WTC11 (cell line): ENCODE measurements at regions of chr5 and their contacts with region 1.

Region 1: GRCh38 chr5:40904205-40904993 is 4.9 kb upstream of the C7 start:
- DNase-seq: peak; percentile 68
- ATAC-seq: peak; percentile 99
- H3K4me3 Mint-ChIP-seq: no peak overlapping the region
- H3K27ac Mint-ChIP-seq: no peak overlapping the region
- H3K4me1 Mint-ChIP-seq: peaks cover 14% of the 10 kb centered on the region
- H3K27me3 Mint-ChIP-seq: no peaks in the 10 kb centered on the region
- CTCF ChIP-seq: peak; percentile 87

Region 2: GRCh38 chr5:40914835-40915234 is 10.4 kb after region 1 on chr5:
- CTCF ChIA-PET with region 1: interaction called, 24 read pairs
- POLR2A ChIA-PET with region 1: no interaction called
- DNase-seq: no peak
- ATAC-seq: peak; percentile 16; the same call in 1 of the 2 replicates
- H3K4me3 Mint-ChIP-seq: no peak overlapping the region
- H3K27ac Mint-ChIP-seq: no peak overlapping the region
- H3K4me1 Mint-ChIP-seq: peaks cover 20% of the 10 kb centered on the region
- H3K27me3 Mint-ChIP-seq: peaks cover 28% of the 10 kb centered on the region
- CTCF ChIP-seq: no peak

Region 3: GRCh38 chr5:41270423-41271251 is 366.2 kb after region 1 on chr5:
- CTCF ChIA-PET with region 1: interaction called, 16 read pairs
- POLR2A ChIA-PET with region 1: no interaction called
- DNase-seq: peak; percentile 25
- ATAC-seq: peak; percentile 90
- H3K4me3 Mint-ChIP-seq: no peak overlapping the region
- H3K27ac Mint-ChIP-seq: no peak overlapping the region
- H3K4me1 Mint-ChIP-seq: no peaks in the 10 kb centered on the region
- H3K27me3 Mint-ChIP-seq: no peaks in the 10 kb centered on the region
- CTCF ChIP-seq: peak; percentile 52

Region 4: GRCh38 chr5:41410737-41411136 is 506.3 kb after region 1 on chr5:
- CTCF ChIA-PET with region 1: interaction called, 15 read pairs
- POLR2A ChIA-PET with region 1: no interaction called
- DNase-seq: peak; percentile 33
- ATAC-seq: peak; percentile 82
- H3K4me3 Mint-ChIP-seq: no peak overlapping the region
- H3K27ac Mint-ChIP-seq: no peak overlapping the region
- H3K4me1 Mint-ChIP-seq: no peaks in the 10 kb centered on the region
- H3K27me3 Mint-ChIP-seq: no peaks in the 10 kb centered on the region
- CTCF ChIP-seq: no peak

Region 5: DNA sequence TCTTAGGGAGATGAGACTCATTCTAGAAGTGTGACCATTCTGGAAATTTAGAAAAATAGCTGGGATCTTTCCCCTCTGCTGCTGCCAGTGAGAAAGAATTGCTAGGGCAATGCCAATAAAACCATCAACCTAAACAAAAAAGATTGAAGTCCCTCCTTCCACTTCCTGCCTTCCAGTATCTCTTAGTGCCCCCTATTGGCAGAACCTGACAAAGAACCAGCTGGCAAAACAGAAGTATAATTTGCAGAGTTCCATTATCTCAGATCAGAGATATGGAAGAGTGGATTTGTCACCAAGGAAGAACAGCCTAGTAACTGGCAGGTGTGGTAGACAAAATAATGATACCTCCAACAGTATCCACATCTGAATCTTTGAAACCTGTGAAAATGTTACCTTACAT is 619.8 kb after region 1 on chr5:
- CTCF ChIA-PET with region 1: interaction called, 14 read pairs
- POLR2A ChIA-PET with region 1: no interaction called
- DNase-seq: peak; percentile 19
- ATAC-seq: peak; percentile 65
- H3K4me3 Mint-ChIP-seq: no peak overlapping the region
- H3K27ac Mint-ChIP-seq: no peak overlapping the region
- H3K4me1 Mint-ChIP-seq: peaks cover 10% of the 10 kb centered on the region
- H3K27me3 Mint-ChIP-seq: no peaks in the 10 kb centered on the region
- CTCF ChIP-seq: no peak; the same call in 1 of the 2 replicates